Activated CD4-positive, alpha-beta memory T cell treated with anti-CD3 and anti-CD28 coated beads for 36 hours (primary cell): ENCODE measurements at regions of chr9 and their contacts with region 1.

Region 1: DNA sequence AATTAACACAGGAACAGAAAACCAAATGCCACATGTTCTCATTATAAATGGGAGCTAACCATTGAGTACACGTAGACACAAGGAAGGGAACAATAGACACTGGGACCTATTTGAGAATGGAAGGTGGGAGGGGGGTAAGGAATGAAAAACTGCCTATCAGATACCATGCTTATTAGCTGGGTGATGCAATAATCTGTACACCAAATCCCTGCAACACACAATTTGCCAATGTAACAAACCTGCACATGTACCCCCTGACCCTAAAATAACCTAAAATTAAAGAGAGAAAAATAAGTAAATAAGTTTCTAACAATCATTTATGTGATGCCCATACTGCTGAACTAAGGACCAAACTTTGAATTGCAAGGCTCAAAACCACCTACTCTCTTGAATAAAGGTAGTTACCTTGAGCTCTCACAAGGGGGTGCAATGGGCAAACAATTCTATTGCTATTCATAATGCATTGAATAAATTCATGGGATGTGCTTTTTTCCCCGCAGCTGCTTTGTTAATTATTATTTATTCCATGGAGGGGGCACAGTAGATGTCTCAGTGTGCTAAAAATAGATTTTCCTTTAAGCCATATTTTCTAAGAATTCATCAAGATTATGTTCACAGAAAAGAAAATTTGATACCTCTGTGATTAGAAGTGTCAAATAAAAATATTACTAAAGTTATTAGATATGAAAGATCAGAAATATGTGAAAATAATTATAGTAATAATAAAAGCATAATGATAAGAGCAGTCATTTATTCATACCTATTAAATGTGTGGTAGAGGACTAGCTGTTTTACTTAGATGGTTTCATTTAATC is 76.2 kb upstream of the PTPN3 start:
- DNase-seq: no peak
- H3K4me3 Mint-ChIP-seq: no peak overlapping the region
- H3K27ac Mint-ChIP-seq: no peak overlapping the region
- H3K4me1 Mint-ChIP-seq: no peaks in the 10 kb centered on the region
- H3K27me3 Mint-ChIP-seq: no peaks in the 10 kb centered on the region

Region 2: GRCh38 chr9:109556061-109556460 is 18.2 kb before region 1 on chr9:
- CTCF ChIA-PET with region 1: no interaction called
- POLR2A ChIA-PET with region 1: no interaction called
- intact Hi-C with region 1: no loop called
- DNase-seq: no peak
- H3K4me3 Mint-ChIP-seq: no peak overlapping the region
- H3K27ac Mint-ChIP-seq: no peak overlapping the region
- H3K4me1 Mint-ChIP-seq: no peaks in the 10 kb centered on the region
- H3K27me3 Mint-ChIP-seq: peaks cover 7% of the 10 kb centered on the region

Region 3: GRCh38 chr9:109652964-109653363 is 78.7 kb after region 1 on chr9:
- CTCF ChIA-PET with region 1: no interaction called
- POLR2A ChIA-PET with region 1: no interaction called
- intact Hi-C with region 1: no loop called
- DNase-seq: no peak
- H3K4me3 Mint-ChIP-seq: no peak overlapping the region
- H3K27ac Mint-ChIP-seq: no peak overlapping the region
- H3K4me1 Mint-ChIP-seq: no peaks in the 10 kb centered on the region
- H3K27me3 Mint-ChIP-seq: no peaks in the 10 kb centered on the region

Region 4: DNA sequence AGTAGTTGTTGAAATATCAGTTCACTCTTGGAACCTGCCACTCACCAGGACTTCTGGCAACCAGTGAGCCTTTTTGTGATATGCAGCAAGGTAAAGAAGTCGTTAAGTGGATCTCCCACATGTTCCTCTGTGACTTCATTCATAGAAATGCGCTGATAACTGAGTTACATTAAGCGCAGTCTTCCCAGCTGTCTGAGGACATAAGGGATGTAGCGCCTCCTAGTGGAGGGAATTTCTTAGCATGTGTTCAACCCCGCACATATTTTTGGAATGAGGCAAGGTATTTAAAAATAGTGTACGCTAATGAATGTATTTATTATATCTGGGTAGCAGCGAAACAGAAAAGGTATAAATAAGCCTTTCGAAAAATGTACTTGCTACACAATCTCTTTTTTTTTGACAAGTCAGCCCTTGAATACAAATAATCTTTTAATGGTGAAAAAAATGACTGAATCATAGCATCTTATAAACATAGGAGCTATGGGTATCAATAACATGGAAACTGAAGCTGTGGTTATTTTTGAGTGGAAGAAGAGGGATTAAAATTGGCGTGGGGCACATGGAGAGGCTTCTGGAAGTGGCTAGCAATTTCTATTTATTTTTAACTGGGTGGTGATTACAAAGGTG is 243.7 kb after region 1 on chr9:
- CTCF ChIA-PET with region 1: interaction called, 31 read pairs
- POLR2A ChIA-PET with region 1: no interaction called
- intact Hi-C with region 1: loop called (anchors 2 kb)
- DNase-seq: peak; percentile 43
- H3K4me3 Mint-ChIP-seq: no peak overlapping the region
- H3K27ac Mint-ChIP-seq: no peak overlapping the region
- H3K4me1 Mint-ChIP-seq: no peaks in the 10 kb centered on the region
- H3K27me3 Mint-ChIP-seq: peaks cover 10% of the 10 kb centered on the region

Region 5: DNA sequence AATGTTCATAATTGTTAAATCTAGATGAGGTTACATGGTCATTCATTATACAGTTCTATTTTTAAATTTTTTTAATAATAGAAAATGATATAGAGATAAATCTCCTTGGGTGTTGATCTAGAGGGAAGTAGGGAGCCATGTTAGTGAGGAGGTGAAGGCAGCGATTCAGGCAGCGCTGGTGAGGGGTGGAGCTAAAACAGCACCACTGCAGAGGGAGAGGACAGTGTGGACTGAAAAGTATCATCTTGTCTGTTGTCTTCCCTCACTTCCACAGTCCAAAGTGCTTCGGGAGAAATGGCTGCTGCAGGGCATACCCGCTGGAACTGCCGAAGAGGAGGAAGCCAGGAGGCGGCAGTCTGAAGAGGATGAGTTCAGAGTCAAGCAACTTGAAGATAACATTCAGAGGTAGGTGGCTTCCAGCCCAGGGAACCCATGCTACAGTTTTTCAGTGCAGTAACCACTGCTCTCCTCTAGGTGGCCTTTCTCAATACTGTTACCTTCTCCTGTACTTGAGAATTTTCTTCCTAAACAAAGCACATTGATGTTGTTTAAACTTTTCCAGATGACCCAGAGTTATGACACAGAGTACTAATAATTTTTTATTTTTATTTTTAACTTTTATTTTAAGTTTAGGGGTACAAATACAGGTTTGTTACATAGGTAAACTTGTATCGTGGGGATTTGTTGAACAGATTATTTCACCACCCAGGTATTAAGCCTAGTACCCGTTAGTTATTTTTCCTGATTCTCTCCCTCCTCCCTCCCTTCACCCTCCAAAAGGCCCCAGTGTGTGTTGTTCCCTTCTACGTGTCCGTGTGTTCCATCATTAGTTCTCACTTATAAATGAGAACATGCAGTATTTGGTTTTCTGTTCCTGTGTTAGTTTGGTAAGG is 306.2 kb after region 1 on chr9:
- CTCF ChIA-PET with region 1: no interaction called
- POLR2A ChIA-PET with region 1: no interaction called
- intact Hi-C with region 1: loop called (anchors 10 kb)
- DNase-seq: peak; percentile 46
- H3K4me3 Mint-ChIP-seq: peak overlapping the region; percentile 33
- H3K27ac Mint-ChIP-seq: no peak overlapping the region
- H3K4me1 Mint-ChIP-seq: peaks cover 9% of the 10 kb centered on the region
- H3K27me3 Mint-ChIP-seq: peaks cover 10% of the 10 kb centered on the region

Region 6: GRCh38 chr9:110217656-110218099 is 643.4 kb after region 1 on chr9:
- CTCF ChIA-PET with region 1: interaction called, 6 read pairs
- POLR2A ChIA-PET with region 1: no interaction called
- intact Hi-C with region 1: loop called (anchors 5 kb)
- DNase-seq: no peak
- H3K4me3 Mint-ChIP-seq: no peak overlapping the region
- H3K27ac Mint-ChIP-seq: no peak overlapping the region
- H3K4me1 Mint-ChIP-seq: no peaks in the 10 kb centered on the region
- H3K27me3 Mint-ChIP-seq: peaks cover 2% of the 10 kb centered on the region